Posterior vena cava (tissue), 2 donors: ENCODE measurements at regions of chr1 and their contacts with region 1.

Region 1: DNA sequence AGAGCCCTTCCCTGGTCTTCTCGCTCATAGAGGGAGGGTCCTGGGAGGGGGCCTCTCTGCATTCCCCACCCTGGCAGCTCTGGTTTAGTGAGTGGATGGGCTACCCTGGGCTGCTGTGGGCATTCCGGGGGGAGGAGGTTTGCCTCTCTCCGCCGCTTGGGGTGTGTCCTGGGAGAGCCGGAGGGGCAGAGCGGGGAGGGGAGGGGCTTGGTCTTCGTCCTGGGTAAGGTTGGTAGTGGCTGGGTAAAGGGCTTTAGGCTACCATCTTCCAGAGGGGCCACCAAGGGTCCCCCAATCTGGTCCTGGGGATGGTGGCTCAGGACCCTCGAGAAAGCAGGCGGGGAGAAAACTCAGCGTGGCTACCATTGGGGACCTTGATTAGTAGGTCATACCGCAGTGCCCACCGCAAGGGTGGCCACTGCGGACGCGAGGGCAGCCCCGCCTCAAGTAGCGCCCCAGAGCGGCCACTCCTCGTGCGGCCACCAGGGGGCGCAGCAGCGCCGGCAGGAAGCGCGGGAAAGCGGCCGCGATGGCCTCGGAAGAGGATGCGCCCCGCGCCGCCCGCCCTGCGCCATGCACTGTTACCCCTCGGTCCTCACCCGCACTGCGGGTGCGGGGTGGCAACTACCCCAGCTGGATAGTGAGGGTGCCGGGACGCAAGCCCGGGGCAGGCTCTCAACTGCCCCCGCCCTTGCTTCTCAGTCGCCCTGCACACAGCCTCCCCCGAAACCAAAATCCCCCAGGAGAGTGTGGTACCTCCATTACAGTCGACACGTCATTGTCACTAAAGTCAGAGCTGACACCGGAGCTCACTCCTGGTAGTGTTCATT is 44.1 kb upstream of the SLC25A33 start:
- DNase-seq: peak; percentile 86

Region 2: GRCh38 chr1:9573723-9574122 is 78.6 kb after region 1 on chr1:
- intact Hi-C with region 1: loop called (anchors 5 kb)
- DNase-seq: no peak